Adrenal gland (tissue), 19 donors: ENCODE measurements at regions of chr16 and their contacts with region 1.

Region 1: DNA sequence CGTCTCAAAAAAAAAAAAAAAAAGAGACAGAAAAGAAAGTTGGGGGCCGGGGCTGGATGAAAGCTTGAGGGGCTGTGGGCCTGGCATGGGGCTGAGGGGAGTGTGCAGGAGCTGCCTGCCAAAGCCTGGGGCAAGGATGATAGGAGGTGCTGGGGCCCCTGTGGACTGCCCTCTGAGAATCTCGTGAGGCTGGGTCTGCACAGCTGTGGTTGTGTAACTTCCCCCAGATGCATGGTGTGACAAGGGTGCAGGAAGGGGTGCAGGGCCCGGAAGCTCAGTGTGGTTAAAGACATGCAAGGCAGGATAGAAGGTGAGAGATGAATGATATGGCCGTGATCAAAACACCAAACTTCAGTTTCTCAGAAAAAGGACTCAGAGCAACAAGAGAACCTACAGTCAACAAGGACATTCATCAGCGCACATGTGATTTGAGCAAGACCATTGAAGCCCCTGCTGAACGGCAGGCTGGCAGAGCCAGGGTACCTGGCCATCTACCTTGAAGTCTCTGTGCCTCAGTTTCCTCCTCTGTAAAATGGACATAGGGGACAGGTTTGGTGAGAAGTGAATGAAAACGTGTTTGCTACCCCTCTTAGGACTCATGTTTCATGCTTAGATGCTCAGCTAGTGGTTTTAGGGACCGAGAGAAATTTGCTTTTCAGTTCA is 9.6 kb downstream of the IL32 start:
- DNase-seq: no peak
- H3K4me3 ChIP-seq: no peak overlapping the region
- H3K27ac ChIP-seq: peak overlapping the region in 1 of 5 donors; percentile 40
- H3K4me1 ChIP-seq: no peaks in the 10 kb centered on the region
- H3K27me3 ChIP-seq: no peaks in the 10 kb centered on the region
- CTCF ChIP-seq: no peak
- POLR2A ChIP-seq: no peak

Region 2: GRCh38 chr16:2799866-2800239 is 275.1 kb before region 1 on chr16:
- intact Hi-C with region 1: loop called in 1 of 2 experiments (anchors 10 kb)
- DNase-seq: no peak
- H3K4me3 ChIP-seq: no peak overlapping the region
- H3K27ac ChIP-seq: no peak overlapping the region
- H3K4me1 ChIP-seq: no peaks in the 10 kb centered on the region
- H3K27me3 ChIP-seq: peaks cover 4% of the 10 kb centered on the region
- CTCF ChIP-seq: no peak
- POLR2A ChIP-seq: no peak

Region 3: GRCh38 chr16:2952679-2953078 is 122.3 kb before region 1 on chr16:
- intact Hi-C with region 1: no loop called
- DNase-seq: no peak
- H3K4me3 ChIP-seq: no peak overlapping the region
- H3K27ac ChIP-seq: no peak overlapping the region
- H3K4me1 ChIP-seq: peaks cover 0 to 6% of the 10 kb centered on the region in 2 donors
- H3K27me3 ChIP-seq: no peaks in the 10 kb centered on the region
- CTCF ChIP-seq: no peak
- POLR2A ChIP-seq: no peak